ENCODE measurements at regions of chr17 and their contacts with region 1.

Region 1: DNA sequence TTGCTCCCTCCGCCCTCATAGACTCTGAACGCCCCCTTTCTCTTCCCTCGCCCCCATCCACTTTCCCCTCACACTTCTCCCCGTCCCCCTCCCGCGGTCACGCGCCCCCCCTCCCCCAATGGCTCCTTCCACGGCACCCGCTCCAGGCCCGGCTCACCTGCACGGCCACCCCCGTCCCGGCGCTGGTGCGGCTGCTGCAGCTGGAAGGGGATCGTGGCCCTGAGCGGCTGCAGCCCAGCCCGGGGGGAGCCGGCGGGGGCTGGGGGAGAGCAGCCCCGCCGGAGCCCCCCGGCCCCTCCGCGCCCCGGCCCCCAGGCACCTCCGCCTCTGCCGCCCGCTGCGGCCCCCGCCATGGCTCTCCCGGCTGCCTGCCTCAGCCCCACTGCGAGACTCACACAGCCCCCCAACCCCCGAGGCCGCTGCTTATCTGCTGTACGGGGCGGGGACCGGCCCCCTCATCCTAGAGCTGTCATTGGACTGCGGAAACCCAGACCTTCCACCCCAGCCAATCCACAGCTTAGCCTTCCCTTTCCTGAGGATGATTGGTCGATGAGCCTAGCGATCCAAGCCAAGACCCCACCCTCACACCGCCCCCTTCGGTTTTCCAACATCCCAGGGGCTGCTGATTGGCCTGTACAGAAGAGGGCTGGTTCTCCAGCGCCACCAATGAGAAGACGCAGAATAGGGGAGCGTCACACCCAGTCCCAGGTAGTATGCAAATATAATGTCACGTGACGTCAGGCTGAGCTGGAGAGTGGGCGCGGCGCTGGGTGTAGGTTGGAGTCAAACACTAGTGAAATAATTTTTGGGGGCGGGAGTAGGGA is at the start of gene FAM117A:
- DNase-seq: peak; percentile 91 to 98
- ATAC-seq: peak; percentile 97 to 99 (median 99)
- H3K4me3 ChIP-seq: peak within 1 kb of the TSS; percentile 62 to 86 (median 72)
- H3K27ac ChIP-seq: peak within 1 kb of the TSS in 9 of 10 donors; percentile 35 to 82 (median 78)
- H3K4me1 ChIP-seq: peaks cover 0 to 41% (median 28%) of the 10 kb centered on the region in 9 donors
- H3K27me3 ChIP-seq: no peaks in the 10 kb centered on the region
- CTCF ChIP-seq: peak in 1 of 9 donors; percentile 5
- total RNA-seq, gene FAM117A: 4.0 to 14.0 (median 10.5) TPM

Region 2: DNA sequence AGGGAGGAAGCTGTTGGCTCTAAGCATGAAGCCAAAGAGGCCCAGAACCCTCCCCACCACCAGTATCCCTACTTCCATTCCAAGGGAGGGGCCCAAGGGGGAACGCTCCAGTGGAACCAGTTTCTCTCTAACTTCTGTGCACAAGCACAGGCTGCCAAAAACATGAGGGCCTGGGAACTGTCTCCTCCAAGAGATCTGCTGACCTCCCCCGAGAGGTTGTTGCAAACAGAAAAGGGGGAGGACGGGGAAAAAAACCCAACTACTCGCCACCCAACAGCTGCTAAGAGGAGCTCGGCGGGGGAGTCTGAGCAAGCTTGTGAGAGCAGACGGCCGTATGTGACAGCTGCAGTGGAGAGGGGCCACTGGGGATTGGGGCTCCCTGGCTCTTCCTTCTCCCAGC is 40.5 kb before region 1 on chr17:
- intact Hi-C with region 1: loop called in 5 of 10 experiments (anchors 5 kb)
- DNase-seq: peak; percentile 65 to 92
- ATAC-seq: peak; percentile 82 to 95 (median 86)
- H3K4me3 ChIP-seq: peak overlapping the region in 1 of 10 donors; percentile 14
- H3K27ac ChIP-seq: peak overlapping the region; percentile 26 to 86 (median 72)
- H3K4me1 ChIP-seq: peaks cover 8 to 71% (median 36%) of the 10 kb centered on the region in 9 donors
- H3K27me3 ChIP-seq: no peaks in the 10 kb centered on the region
- CTCF ChIP-seq: no peak

Region 3: DNA sequence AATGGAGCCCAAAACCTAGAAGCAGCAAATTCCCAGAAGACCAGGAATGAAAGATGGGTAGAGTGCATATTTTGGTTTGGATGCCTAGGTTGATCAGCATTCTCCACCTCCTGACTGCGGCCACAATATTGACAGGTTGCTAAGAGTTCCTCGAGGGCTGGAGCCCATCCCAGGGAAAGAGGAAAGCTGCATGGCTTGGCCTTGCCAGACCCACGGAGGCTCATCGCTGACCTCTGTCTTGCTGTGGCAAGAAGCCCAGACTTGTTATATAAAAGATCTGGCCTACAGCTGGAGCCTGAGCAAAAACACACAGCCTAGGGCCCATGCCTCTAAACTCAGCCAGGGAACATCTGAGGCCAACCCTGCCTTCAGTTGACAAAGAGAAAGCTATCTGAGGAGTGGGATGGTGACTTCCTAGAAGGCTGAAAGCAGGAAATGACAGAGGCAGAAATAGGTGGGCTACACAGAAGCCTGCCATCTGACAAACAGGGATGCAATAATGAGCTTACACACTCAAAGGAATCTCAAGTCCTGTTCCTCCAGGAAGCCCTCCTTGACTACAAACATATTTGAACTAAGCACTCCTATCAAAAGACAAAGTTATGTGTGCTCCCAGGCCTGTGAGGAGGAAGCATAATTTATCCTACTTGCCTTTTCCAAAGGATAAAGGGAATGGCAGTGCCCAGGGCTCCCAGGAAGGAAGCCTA is 33.7 kb before region 1 on chr17:
- intact Hi-C with region 1: loop called in 2 of 10 experiments (anchors 5 kb)
- DNase-seq: peak; percentile 81 to 93
- ATAC-seq: peak; percentile 95 to 98 (median 96)
- H3K4me3 ChIP-seq: peak overlapping the region in 1 of 10 donors; percentile 1
- H3K27ac ChIP-seq: peak overlapping the region; percentile 49 to 91 (median 78)
- H3K4me1 ChIP-seq: peaks cover 21 to 82% (median 62%) of the 10 kb centered on the region in 9 donors
- H3K27me3 ChIP-seq: no peaks in the 10 kb centered on the region
- CTCF ChIP-seq: no peak

Region 4: GRCh38 chr17:49742166-49742638 is 21.7 kb before region 1 on chr17:
- intact Hi-C with region 1: loop called in 1 of 10 experiments (anchors 2 kb)
- DNase-seq: no peak
- ATAC-seq: peak in 4 of 8 donors; percentile 25 to 45 (median 34)
- H3K4me3 ChIP-seq: peak overlapping the region in 1 of 10 donors; percentile 42
- H3K27ac ChIP-seq: peak overlapping the region in 9 of 10 donors; percentile 2 to 87 (median 69)
- H3K4me1 ChIP-seq: peaks cover 18 to 100% (median 82%) of the 10 kb centered on the region in 9 donors
- H3K27me3 ChIP-seq: no peaks in the 10 kb centered on the region
- CTCF ChIP-seq: no peak

Region 5: GRCh38 chr17:49861150-49861892 is 97.4 kb after region 1 on chr17:
- intact Hi-C with region 1: no loop called
- DNase-seq: peak in 1 of 2 donors; percentile 27
- ATAC-seq: peak in 7 of 8 donors; percentile 16 to 58 (median 40)
- H3K4me3 ChIP-seq: no peak overlapping the region
- H3K27ac ChIP-seq: no peak overlapping the region
- H3K4me1 ChIP-seq: peaks cover 0 to 12% (median 3%) of the 10 kb centered on the region in 9 donors
- H3K27me3 ChIP-seq: peaks cover 0 to 14% (median 0%) of the 10 kb centered on the region in 7 donors
- CTCF ChIP-seq: peak; percentile 54 to 90 (median 84)

Region 6: GRCh38 chr17:50020841-50021599 is 257.1 kb after region 1 on chr17:
- intact Hi-C with region 1: no loop called
- DNase-seq: no peak
- ATAC-seq: peak in 1 of 8 donors; percentile 13
- H3K4me3 ChIP-seq: no peak overlapping the region
- H3K27ac ChIP-seq: no peak overlapping the region
- H3K4me1 ChIP-seq: peaks cover 0 to 17% (median 0%) of the 10 kb centered on the region in 9 donors
- H3K27me3 ChIP-seq: peaks cover 0 to 5% (median 0%) of the 10 kb centered on the region in 7 donors
- CTCF ChIP-seq: no peak